Calu3 (cell line): ENCODE measurements at regions of chr17 and their contacts with region 1.

Region 1: DNA sequence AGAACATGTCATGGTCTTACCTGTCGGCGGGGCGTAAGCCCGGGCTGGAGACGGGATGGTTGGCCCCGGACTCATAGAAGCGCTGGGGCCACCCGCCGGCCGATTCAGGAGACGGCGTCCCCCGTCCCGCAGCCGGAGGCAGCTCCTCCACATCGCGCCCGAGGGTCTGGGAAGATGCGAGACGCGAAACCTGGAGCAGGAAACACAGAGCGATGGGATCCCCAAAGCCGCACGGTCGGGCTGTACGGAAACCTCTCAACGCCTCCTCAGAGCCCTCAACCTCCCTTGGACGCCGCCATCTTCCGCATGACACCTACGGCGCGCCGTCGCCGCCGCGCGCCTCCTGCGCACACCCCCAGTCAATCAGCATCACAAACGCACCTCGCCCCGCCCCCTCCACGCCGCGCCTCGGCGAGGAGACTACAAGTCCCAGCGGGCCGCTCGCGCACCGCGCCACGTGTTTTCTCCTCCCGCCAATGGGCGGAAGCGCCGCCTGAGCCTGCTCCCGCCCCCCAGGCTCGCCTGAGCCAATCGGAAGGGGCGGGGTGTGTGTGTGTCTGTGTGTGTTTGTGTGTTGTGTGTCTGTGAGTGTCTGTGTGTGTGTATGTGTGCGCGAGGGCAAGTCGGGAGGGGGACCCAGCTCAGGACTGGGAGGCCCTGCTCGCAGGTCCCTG is at the starts of genes ATPAF2 and GID4:
- DNase-seq: peak; percentile 97
- H3K4me3 Mint-ChIP-seq: peak within 1 kb of the TSS; percentile 95
- H3K27ac Mint-ChIP-seq: peak within 1 kb of the TSS; percentile 88
- H3K4me1 Mint-ChIP-seq: peaks cover 31% of the 10 kb centered on the region
- H3K27me3 Mint-ChIP-seq: no peaks in the 10 kb centered on the region
- CTCF ChIP-seq: no peak
- total RNA-seq, gene ATPAF2: 17.7 and 19.6 TPM in 2 replicates
- total RNA-seq, gene GID4: 7.3 and 7.4 TPM in 2 replicates

Region 2: DNA sequence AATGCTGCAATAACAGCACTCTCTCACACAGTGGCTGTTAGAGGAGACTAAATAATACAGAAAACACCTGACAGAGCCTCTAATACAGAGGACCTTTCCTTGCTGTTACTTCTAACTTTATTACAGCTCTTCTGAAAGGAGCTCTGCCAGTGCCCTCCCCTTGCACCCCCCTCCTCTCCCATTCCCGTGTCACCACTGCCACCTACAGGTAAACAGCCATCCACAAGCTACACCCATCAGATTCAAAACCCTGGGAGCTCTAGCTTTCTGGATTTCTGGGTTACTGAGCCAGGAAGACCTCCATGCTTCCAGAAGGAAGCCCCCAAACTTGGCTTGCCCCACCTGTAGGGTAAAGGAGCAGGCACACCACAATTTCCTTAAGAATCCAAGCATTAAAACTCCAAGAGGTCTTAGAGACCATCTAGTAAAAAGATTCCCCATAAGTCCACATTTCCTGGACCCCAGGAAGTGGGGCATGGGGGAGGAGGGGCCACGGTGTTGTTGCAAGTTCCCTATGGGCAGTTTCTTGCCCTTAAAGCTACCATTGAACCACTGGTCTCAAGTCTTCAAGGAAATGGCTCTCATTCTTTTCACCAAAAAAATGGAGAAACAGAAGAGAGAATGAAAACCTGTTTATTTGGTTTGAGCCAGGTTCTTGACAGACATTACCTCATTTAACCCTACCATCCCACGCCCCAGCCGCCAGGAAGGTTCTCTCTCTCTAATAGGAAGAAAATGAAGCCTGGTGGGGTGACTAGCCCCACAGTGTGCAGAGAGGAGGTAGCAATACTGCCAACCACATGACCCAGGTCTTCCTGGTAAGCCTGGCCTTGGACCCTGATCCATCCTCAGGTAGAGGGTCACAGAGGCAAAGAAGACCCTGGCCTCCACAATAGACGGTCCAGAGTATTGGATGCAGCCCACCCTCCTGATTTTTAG is 119.6 kb before region 1 on chr17:
- CTCF ChIA-PET with region 1: no interaction called
- intact Hi-C with region 1: loop called (anchors 10 kb)
- DNase-seq: peak; percentile 73
- H3K4me3 Mint-ChIP-seq: no peak overlapping the region
- H3K27ac Mint-ChIP-seq: no peak overlapping the region
- H3K4me1 Mint-ChIP-seq: peaks cover 27% of the 10 kb centered on the region
- H3K27me3 Mint-ChIP-seq: no peaks in the 10 kb centered on the region
- CTCF ChIP-seq: peak; percentile 25